ENCODE measurements at regions of chr1 and their contacts with region 1.

Region 1: GRCh38 chr1:184163674-184164465 is 112.3 kb downstream of the TSEN15 start:
- DNase-seq: peak; percentile 31
- H3K4me3 Mint-ChIP-seq: no peak overlapping the region
- H3K27ac Mint-ChIP-seq: no peak overlapping the region
- H3K4me1 Mint-ChIP-seq: peaks cover 14% of the 10 kb centered on the region
- H3K27me3 Mint-ChIP-seq: peaks cover 1% of the 10 kb centered on the region

Region 2: GRCh38 chr1:183841950-183842794 is 321.7 kb before region 1 on chr1:
- CTCF ChIA-PET with region 1: interaction called, 4 read pairs
- POLR2A ChIA-PET with region 1: no interaction called
- intact Hi-C with region 1: loop called (anchors 1 kb)
- DNase-seq: peak; percentile 51
- H3K4me3 Mint-ChIP-seq: peak overlapping the region; percentile 40
- H3K27ac Mint-ChIP-seq: peak overlapping the region; percentile 66
- H3K4me1 Mint-ChIP-seq: peaks cover 25% of the 10 kb centered on the region
- H3K27me3 Mint-ChIP-seq: no peaks in the 10 kb centered on the region

Region 3: GRCh38 chr1:184036517-184036949 is 127.3 kb before region 1 on chr1:
- CTCF ChIA-PET with region 1: no interaction called
- POLR2A ChIA-PET with region 1: no interaction called
- intact Hi-C with region 1: loop called (anchors 1 kb)
- DNase-seq: peak; percentile 23
- H3K4me3 Mint-ChIP-seq: peak overlapping the region; percentile 62
- H3K27ac Mint-ChIP-seq: no peak overlapping the region
- H3K4me1 Mint-ChIP-seq: peaks cover 12% of the 10 kb centered on the region
- H3K27me3 Mint-ChIP-seq: peaks cover 50% of the 10 kb centered on the region

Region 4: DNA sequence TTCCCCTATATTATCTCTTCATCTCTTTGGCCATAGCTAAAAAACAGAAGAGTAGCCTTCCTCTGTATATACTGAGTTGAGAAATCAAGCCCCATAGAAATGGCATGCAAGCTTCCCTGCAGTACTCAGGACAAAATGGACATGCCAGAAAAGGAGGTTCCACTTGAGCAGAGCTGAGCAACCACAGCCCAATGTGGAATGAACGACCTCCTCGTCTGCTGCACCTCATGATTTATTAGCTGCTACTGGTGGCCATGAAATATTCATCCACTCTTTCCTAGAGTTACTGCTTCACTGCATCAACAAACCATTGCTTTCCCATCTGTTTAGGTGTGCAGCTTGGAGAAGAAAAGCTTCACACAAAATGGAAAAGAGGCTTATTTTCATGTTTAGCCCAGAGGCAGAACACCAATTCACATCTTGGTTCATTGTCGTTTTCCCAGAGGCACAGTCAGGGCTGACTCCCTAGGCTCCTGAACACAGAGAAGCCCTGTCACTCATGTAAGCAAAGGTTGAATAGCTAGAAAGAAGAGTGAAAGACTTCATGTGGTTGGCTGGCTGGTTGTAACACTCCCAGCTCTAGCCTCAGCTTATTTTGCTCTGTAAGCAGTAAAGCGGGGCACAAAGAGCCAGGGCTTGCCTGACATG is 35.7 kb after region 1 on chr1:
- CTCF ChIA-PET with region 1: no interaction called
- POLR2A ChIA-PET with region 1: no interaction called
- intact Hi-C with region 1: loop called (anchors 5 kb)
- DNase-seq: no peak
- H3K4me3 Mint-ChIP-seq: no peak overlapping the region
- H3K27ac Mint-ChIP-seq: no peak overlapping the region
- H3K4me1 Mint-ChIP-seq: no peaks in the 10 kb centered on the region
- H3K27me3 Mint-ChIP-seq: peaks cover 2% of the 10 kb centered on the region

Region 5: GRCh38 chr1:184489908-184490307 is 326.0 kb after region 1 on chr1:
- CTCF ChIA-PET with region 1: interaction called, 3 read pairs
- POLR2A ChIA-PET with region 1: no interaction called
- intact Hi-C with region 1: loop called (anchors 2 kb)
- DNase-seq: no peak
- H3K4me3 Mint-ChIP-seq: no peak overlapping the region
- H3K27ac Mint-ChIP-seq: no peak overlapping the region
- H3K4me1 Mint-ChIP-seq: peaks cover 11% of the 10 kb centered on the region
- H3K27me3 Mint-ChIP-seq: peaks cover 3% of the 10 kb centered on the region